H1 (cell line): ENCODE measurements at regions of chr1 and their contacts with region 1.

Region 1: GRCh38 chr1:37602750-37603694 is 7.3 kb upstream of the GNL2 start:
- DNase-seq: peak in 1 of 2 experiments; percentile 52
- H3K4me3 ChIP-seq: no peak overlapping the region
- H3K27ac ChIP-seq: no peak overlapping the region
- H3K4me1 ChIP-seq: no peaks in the 10 kb centered on the region
- H3K27me3 ChIP-seq: peaks cover 0 to 8% (median 0%) of the 10 kb centered on the region in 4 experiments; a peak in 4 of 7 replicates
- CTCF ChIP-seq: peak; percentile 47 to 81 (median 65)
- EP300 ChIP-seq: no peak
- POLR2A ChIP-seq: no peak
- RAD21 ChIP-seq: peak; percentile 64 to 79

Region 2: DNA sequence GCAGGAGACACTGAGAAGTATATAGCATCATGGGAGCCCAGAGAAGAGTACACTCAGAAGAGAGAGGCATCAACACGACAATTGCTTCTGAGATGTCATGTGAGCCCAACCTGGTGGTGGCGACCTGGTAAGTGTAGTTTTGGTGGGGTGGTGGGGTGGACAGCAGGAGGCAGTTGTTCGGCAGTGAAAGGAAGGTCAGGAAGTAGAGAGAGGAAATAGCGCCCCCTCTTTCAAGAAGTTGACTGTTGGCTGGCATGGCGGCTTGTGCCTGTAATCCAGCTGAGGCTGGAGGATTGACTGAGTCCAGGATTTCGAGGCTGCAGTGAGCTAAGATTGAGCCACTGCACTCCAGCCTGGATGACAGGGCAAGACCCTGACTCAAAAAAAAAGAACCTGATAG is 19.1 kb after region 1 on chr1:
- CTCF ChIA-PET with region 1: interaction called, 206 read pairs
- POLR2A ChIA-PET with region 1: interaction called, 3 read pairs
- DNase-seq: no peak
- H3K4me3 ChIP-seq: no peak overlapping the region
- H3K27ac ChIP-seq: no peak overlapping the region
- H3K4me1 ChIP-seq: no peaks in the 10 kb centered on the region
- H3K27me3 ChIP-seq: peaks cover 0 to 20% (median 9%) of the 10 kb centered on the region in 4 experiments; a peak in 3 of 7 replicates
- CTCF ChIP-seq: peak; percentile 43 to 76 (median 69)
- EP300 ChIP-seq: no peak
- POLR2A ChIP-seq: no peak
- RAD21 ChIP-seq: peak; percentile 35 to 47

Region 3: GRCh38 chr1:37634244-37634991 is 31.4 kb after region 1 on chr1 and contains the start of gene RSPO1:
- CTCF ChIA-PET with region 1: interaction called, 36 read pairs
- POLR2A ChIA-PET with region 1: no interaction called
- DNase-seq: peak in 1 of 2 experiments; percentile 59
- H3K4me3 ChIP-seq: peak within 1 kb of the TSS; percentile 32 to 56 (median 35)
- H3K27ac ChIP-seq: no peak within 1 kb of the TSS
- H3K4me1 ChIP-seq: peaks cover 0 to 15% (median 7%) of the 10 kb centered on the region in 4 experiments; a peak in 6 of 7 replicates
- H3K27me3 ChIP-seq: peaks cover 64 to 100% (median 94%) of the 10 kb centered on the region in 4 experiments
- CTCF ChIP-seq: no peak
- EP300 ChIP-seq: no peak
- POLR2A ChIP-seq: no peak
- RAD21 ChIP-seq: no peak
- total RNA-seq, gene RSPO1: 0.21 TPM in 1 of 2 replicates, not detected in the other

Region 4: GRCh38 chr1:37650173-37650572 is 47.2 kb after region 1 on chr1:
- CTCF ChIA-PET with region 1: interaction called, 12 read pairs
- POLR2A ChIA-PET with region 1: no interaction called
- DNase-seq: no peak
- H3K4me3 ChIP-seq: no peak overlapping the region
- H3K27ac ChIP-seq: no peak overlapping the region
- H3K4me1 ChIP-seq: no peaks in the 10 kb centered on the region
- H3K27me3 ChIP-seq: peaks cover 0 to 3% (median 1%) of the 10 kb centered on the region in 4 experiments; a peak in 2 of 7 replicates
- CTCF ChIP-seq: no peak
- EP300 ChIP-seq: no peak
- POLR2A ChIP-seq: no peak
- RAD21 ChIP-seq: no peak

Region 5: GRCh38 chr1:37661401-37661800 is 58.4 kb after region 1 on chr1:
- CTCF ChIA-PET with region 1: interaction called, 59 read pairs
- POLR2A ChIA-PET with region 1: interaction called, 3 read pairs
- DNase-seq: no peak
- H3K4me3 ChIP-seq: no peak overlapping the region
- H3K27ac ChIP-seq: no peak overlapping the region
- H3K4me1 ChIP-seq: peaks cover 0 to 30% (median 22%) of the 10 kb centered on the region in 4 experiments; a peak in 6 of 7 replicates
- H3K27me3 ChIP-seq: peaks cover 0 to 3% (median 0%) of the 10 kb centered on the region in 4 experiments; a peak in 1 of 7 replicates
- CTCF ChIP-seq: no peak
- EP300 ChIP-seq: no peak
- POLR2A ChIP-seq: no peak
- RAD21 ChIP-seq: no peak

Region 6: GRCh38 chr1:37682334-37682987 is 79.4 kb after region 1 on chr1:
- CTCF ChIA-PET with region 1: interaction called, 400 read pairs
- POLR2A ChIA-PET with region 1: interaction called, 5 read pairs
- DNase-seq: peak in 1 of 2 experiments; percentile 90
- H3K4me3 ChIP-seq: no peak overlapping the region
- H3K27ac ChIP-seq: no peak overlapping the region
- H3K4me1 ChIP-seq: no peaks in the 10 kb centered on the region
- H3K27me3 ChIP-seq: no peaks in the 10 kb centered on the region
- CTCF ChIP-seq: peak in 2 of 3 experiments; percentile 79 to 81; a peak in 3 of 4 replicates
- EP300 ChIP-seq: no peak
- POLR2A ChIP-seq: no peak
- RAD21 ChIP-seq: peak; percentile 95 to 96